Right ventricle myocardium inferior (tissue), 1 donor: ENCODE measurements at regions of chr10 and their contacts with region 1.

Region 1: DNA sequence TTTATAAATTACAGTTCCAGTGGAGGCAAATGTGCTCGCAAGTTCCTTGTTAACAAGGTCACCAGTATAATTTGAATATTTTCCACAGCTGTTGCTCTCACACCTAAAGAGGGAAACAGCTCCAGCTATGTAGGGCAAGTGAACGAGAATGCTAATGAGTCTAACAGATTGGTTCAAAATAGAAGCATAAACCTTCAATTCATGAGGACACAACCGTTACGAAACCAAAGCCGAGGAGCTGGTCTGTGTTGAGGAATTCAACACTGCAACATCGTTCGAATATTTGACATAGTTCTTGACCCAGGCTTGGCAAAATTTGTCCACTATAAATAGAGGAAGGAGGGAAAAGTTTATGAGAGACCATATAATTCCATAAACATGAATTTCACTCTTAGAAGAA is 161.3 kb downstream of the KLF6 start:
- DNase-seq: no peak
- ATAC-seq: peak; percentile 94

Region 2: DNA sequence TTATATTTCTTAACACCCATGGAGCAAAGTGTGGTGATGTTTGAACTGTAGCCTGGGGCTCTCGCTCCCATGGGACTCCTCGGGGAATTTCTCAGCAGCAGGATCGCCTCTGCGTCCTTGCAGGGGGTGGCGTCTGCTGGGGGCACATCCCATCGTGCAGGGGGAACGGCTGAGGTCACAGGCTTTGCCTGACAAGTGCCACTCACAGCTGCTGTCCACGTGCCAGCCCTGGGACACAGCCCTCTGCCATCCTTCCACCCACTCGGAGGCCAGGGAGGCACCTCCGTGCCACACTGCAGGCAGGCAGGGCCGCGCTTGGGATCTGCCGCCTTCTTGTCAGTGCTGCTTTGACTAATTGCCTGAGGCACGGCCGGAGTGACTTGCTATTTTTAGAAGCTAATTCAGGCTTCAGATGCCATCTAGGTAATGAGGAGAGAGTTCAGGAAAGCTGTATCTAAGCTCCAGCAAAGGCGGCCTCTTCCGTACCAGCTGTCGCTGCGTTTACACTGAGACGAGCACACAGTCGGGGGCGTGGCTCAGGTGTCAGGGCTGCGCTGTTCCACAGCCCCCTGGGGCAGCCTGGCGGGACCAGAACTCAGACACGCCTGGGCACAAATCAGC is 496.9 kb before region 1 on chr10:
- intact Hi-C with region 1: no loop called
- DNase-seq: no peak
- ATAC-seq: peak; percentile 66

Region 3: DNA sequence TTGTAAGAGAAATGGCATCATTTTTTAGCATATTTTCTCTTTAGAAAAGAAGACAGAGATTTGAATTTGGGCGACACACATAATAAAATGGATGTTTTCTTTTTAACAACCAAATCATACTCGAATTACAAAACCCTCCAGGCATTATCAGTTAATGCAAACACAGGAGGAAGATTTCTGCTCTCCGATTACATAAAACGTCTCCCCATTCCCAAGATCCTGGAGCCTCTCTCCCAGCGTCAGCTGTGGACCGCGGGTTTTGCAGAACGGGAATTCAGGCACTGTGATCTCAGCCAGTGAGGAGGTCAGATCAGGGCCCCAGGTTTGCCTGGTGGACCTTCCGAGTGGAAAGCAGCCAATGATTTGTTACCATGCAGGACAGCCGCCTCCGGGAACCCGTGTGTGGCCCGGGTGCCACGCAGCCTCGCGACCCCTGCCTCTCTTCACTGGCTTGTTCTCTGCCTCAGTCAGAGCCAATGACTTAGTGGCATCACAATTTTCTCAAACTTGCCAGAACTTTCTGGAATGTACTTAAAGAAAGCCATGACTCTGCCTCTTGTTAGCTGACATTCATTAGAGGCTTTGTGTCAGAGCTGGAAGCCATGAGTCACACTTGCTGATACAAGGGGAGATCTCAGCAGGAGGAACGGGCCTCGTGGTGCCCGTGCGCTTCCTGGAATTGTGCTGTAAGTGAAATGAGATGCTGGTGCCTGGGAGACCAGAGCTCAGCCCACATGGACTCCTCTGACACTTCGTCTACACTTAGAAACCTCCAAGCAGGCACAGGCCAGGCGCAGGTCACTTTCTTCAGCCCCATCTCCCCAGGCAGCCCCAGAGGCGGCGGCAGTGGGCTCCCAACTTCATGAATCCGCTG is 84.9 kb before region 1 on chr10:
- intact Hi-C with region 1: no loop called
- DNase-seq: peak; percentile 66
- ATAC-seq: no peak

Region 4: DNA sequence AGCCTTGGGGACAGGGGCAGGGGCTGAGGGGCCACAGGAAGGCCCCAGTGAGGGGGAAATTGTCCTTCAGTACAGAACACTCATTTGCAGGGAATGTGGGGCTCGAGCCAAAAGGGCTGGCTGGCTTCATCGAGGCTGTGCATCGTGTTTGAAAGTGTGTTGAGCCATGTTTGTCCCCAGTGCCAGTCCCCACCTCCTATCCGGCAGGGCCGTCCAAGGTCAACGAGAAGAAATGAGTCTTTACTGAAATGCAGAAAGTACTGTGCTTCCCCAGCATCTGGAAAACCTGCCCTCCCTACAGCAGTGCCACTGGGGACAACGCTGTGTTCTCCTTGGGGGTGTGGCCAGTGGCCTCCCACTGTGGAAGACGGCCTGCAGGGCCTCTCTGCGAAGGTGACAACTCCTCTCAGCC is 52.9 kb before region 1 on chr10:
- intact Hi-C with region 1: loop called (anchors 5 kb)
- DNase-seq: no peak
- ATAC-seq: peak; percentile 41

Region 5: DNA sequence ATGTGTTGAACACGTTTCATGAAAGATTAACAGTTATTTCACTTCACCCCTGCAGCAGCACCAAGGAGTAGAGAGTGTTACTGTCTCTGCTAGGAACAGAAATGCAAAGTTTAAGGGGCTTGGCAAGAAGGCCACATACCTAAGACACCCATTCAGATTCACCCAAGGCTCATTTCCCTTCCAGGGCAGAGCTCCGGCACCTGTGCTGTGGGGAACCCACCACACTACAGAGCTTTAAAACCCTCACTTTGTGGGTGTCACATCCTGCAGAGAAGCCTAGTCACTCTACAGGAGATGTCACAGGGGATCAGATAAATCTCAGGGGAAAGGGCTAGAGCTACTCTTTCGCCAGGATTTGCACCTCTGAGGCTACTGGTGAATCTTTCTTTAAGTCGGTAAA is 337.3 kb after region 1 on chr10:
- intact Hi-C with region 1: no loop called
- DNase-seq: no peak
- ATAC-seq: no peak